ENCODE measurements at regions of chr3 and their contacts with region 1.

Region 1: GRCh38 chr3:128680602-128681368 is 30.2 kb upstream of the RPN1 start:
- DNase-seq: peak; percentile 96 to 97 (median 97)
- H3K4me3 ChIP-seq: peak overlapping the region; percentile 76 to 85
- H3K4me3 Mint-ChIP-seq: peak overlapping the region; percentile 87 to 98 (median 97)
- H3K27ac ChIP-seq: peak overlapping the region; percentile 89
- H3K27ac Mint-ChIP-seq: peak overlapping the region; percentile 95 to 99 (median 99)
- H3K4me1 ChIP-seq: peaks cover 27% of the 10 kb centered on the region
- H3K4me1 Mint-ChIP-seq: peaks cover 15 to 36% (median 19%) of the 10 kb centered on the region in 4 donors
- H3K27me3 ChIP-seq: no peaks in the 10 kb centered on the region
- H3K27me3 Mint-ChIP-seq: no peaks in the 10 kb centered on the region

Region 2: GRCh38 chr3:128650096-128651050 is 30.4 kb before region 1 on chr3 and contains the start of gene RPN1:
- CTCF ChIA-PET with region 1: interaction called, 26 read pairs
- POLR2A ChIA-PET with region 1: interaction called, 41 read pairs
- intact Hi-C with region 1: loop called (anchors 1 kb)
- DNase-seq: peak; percentile 96 to 99 (median 97)
- H3K4me3 ChIP-seq: peak within 1 kb of the TSS; percentile 84 to 89
- H3K4me3 Mint-ChIP-seq: peak within 1 kb of the TSS; percentile 85 to 94 (median 88)
- H3K27ac ChIP-seq: peak within 1 kb of the TSS; percentile 92
- H3K27ac Mint-ChIP-seq: peak within 1 kb of the TSS; percentile 88 to 96 (median 93)
- H3K4me1 ChIP-seq: peaks cover 26% of the 10 kb centered on the region
- H3K4me1 Mint-ChIP-seq: peaks cover 24 to 54% (median 34%) of the 10 kb centered on the region in 4 donors
- H3K27me3 ChIP-seq: no peaks in the 10 kb centered on the region
- H3K27me3 Mint-ChIP-seq: no peaks in the 10 kb centered on the region
- total RNA-seq, gene RPN1: 121 to 127 TPM

Region 3: GRCh38 chr3:128714887-128715491 is 34.2 kb after region 1 on chr3:
- CTCF ChIA-PET with region 1: interaction called, 14 read pairs
- POLR2A ChIA-PET with region 1: interaction called, 25 read pairs
- intact Hi-C with region 1: no loop called
- DNase-seq: peak; percentile 38 to 64 (median 47)
- H3K4me3 ChIP-seq: no peak overlapping the region
- H3K4me3 Mint-ChIP-seq: peak overlapping the region in 6 of 8 donors; percentile 41 to 80 (median 67)
- H3K27ac ChIP-seq: no peak overlapping the region
- H3K27ac Mint-ChIP-seq: peak overlapping the region; percentile 58 to 92 (median 91)
- H3K4me1 ChIP-seq: peaks cover 12% of the 10 kb centered on the region
- H3K4me1 Mint-ChIP-seq: peaks cover 9 to 18% (median 13%) of the 10 kb centered on the region in 4 donors
- H3K27me3 ChIP-seq: no peaks in the 10 kb centered on the region
- H3K27me3 Mint-ChIP-seq: no peaks in the 10 kb centered on the region

Region 4: DNA sequence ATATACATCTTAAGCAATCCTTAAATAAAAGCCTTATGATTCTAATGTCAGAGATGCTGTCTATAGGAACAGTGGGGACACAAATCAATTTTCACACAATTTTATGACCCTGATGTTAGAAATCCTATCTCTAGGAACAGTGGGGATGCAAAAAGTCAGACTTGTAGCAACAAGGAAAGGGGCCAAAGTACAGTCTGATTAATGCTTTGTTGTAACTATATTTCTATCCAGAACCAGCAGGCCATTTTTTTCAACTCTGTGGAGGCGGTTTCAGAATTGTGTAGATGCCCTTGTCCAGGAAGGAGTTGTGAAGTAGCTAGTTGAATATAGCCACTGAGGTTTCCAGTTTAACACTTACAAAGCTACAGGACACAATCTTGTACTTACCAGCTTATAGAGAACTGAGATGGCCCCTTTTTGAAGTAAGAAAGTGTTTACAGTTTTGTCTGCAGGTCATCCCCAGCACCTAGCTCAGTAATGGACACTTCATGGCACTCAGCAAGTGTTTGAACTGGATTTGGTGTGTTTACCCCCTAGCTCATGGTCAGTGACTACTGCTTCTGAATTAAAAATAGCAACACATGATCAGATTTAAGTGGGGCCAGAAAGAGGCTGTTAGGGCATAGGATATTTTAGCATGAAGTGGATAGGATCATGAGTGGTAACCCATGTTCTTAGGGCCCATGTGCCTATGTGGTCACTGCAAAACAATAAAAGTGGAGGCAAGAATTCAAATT is 99.5 kb after region 1 on chr3:
- CTCF ChIA-PET with region 1: interaction called, 25 read pairs
- POLR2A ChIA-PET with region 1: interaction called, 3 read pairs
- intact Hi-C with region 1: no loop called
- DNase-seq: no peak
- H3K4me3 ChIP-seq: no peak overlapping the region
- H3K4me3 Mint-ChIP-seq: no peak overlapping the region
- H3K27ac ChIP-seq: no peak overlapping the region
- H3K27ac Mint-ChIP-seq: peak overlapping the region in 6 of 7 donors; percentile 6 to 88 (median 63)
- H3K4me1 ChIP-seq: peaks cover 62% of the 10 kb centered on the region
- H3K4me1 Mint-ChIP-seq: peaks cover 54 to 90% (median 73%) of the 10 kb centered on the region in 4 donors
- H3K27me3 ChIP-seq: no peaks in the 10 kb centered on the region
- H3K27me3 Mint-ChIP-seq: no peaks in the 10 kb centered on the region

Region 5: DNA sequence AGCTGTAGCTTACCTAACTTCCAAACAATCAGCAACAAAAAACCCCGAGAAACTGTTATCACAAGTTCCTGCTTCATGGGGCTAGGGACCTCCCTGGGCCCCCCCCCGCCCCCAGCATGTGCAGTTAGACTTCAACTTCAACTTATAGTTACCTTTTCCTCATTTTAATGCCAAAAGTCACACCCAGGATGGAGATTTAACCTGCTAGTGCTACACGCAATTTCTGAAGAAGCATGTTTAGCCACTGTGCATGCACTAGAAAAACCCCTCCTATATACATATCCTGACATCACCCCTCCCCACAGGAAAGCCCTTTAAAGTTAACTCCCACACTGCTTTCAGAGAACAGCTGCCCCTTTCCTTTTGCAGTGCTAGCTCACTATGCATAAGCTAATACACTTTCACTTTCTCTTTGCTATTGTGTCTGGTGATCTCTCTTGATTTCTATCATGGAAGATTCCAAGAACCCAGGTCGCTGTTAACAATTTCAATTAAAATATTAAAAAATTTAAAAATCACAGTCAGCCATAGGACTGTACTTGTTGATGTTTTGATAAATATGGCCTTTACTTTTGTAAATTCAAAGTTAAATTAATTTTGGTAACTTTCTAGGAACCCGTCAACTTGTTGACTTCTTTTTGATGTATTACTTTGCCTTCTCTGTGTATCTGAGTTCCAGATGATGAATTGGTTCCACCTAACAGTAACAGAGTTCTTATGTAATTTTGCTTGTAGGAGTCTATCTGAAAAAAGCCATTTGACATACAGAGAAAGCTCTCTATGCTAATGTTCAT is 123.4 kb after region 1 on chr3:
- CTCF ChIA-PET with region 1: interaction called, 186 read pairs
- POLR2A ChIA-PET with region 1: interaction called, 54 read pairs
- intact Hi-C with region 1: loop called (anchors 2 kb)
- DNase-seq: peak; percentile 77 to 85 (median 81)
- H3K4me3 ChIP-seq: peak overlapping the region; percentile 26 to 45
- H3K4me3 Mint-ChIP-seq: peak overlapping the region; percentile 78 to 89 (median 84)
- H3K27ac ChIP-seq: peak overlapping the region; percentile 81
- H3K27ac Mint-ChIP-seq: peak overlapping the region; percentile 90 to 97 (median 95)
- H3K4me1 ChIP-seq: peaks cover 68% of the 10 kb centered on the region
- H3K4me1 Mint-ChIP-seq: peaks cover 54 to 78% (median 67%) of the 10 kb centered on the region in 4 donors
- H3K27me3 ChIP-seq: no peaks in the 10 kb centered on the region
- H3K27me3 Mint-ChIP-seq: no peaks in the 10 kb centered on the region

Region 6: GRCh38 chr3:128922804-128923459 is 242.1 kb after region 1 on chr3:
- CTCF ChIA-PET with region 1: interaction called, 34 read pairs
- POLR2A ChIA-PET with region 1: interaction called, 14 read pairs
- intact Hi-C with region 1: loop called (anchors 2 kb)
- DNase-seq: peak; percentile 55 to 64 (median 57)
- H3K4me3 ChIP-seq: peak overlapping the region; percentile 29 to 74
- H3K4me3 Mint-ChIP-seq: peak overlapping the region; percentile 82 to 90 (median 85)
- H3K27ac ChIP-seq: no peak overlapping the region
- H3K27ac Mint-ChIP-seq: peak overlapping the region; percentile 70 to 91 (median 88)
- H3K4me1 ChIP-seq: peaks cover 20% of the 10 kb centered on the region
- H3K4me1 Mint-ChIP-seq: peaks cover 26 to 45% (median 37%) of the 10 kb centered on the region in 4 donors
- H3K27me3 ChIP-seq: no peaks in the 10 kb centered on the region
- H3K27me3 Mint-ChIP-seq: no peaks in the 10 kb centered on the region

Measured in CD4-positive, alpha-beta memory T cell (primary cell).